ENCODE measurements at regions of chr1 and their contacts with region 1.

Region 1: GRCh38 chr1:156114101-156114916 is at the start of gene LMNA:
- DNase-seq: peak; percentile 90 to 98
- H3K4me3 ChIP-seq: peak within 1 kb of the TSS; percentile 93 to 100
- H3K27ac ChIP-seq: peak within 1 kb of the TSS; percentile 97
- H3K4me1 ChIP-seq: peaks cover 6 to 21% of the 10 kb centered on the region in 2 donors
- H3K27me3 ChIP-seq: no peaks in the 10 kb centered on the region
- CTCF ChIP-seq: no peak
- total RNA-seq, gene LMNA: 783 TPM

Region 2: DNA sequence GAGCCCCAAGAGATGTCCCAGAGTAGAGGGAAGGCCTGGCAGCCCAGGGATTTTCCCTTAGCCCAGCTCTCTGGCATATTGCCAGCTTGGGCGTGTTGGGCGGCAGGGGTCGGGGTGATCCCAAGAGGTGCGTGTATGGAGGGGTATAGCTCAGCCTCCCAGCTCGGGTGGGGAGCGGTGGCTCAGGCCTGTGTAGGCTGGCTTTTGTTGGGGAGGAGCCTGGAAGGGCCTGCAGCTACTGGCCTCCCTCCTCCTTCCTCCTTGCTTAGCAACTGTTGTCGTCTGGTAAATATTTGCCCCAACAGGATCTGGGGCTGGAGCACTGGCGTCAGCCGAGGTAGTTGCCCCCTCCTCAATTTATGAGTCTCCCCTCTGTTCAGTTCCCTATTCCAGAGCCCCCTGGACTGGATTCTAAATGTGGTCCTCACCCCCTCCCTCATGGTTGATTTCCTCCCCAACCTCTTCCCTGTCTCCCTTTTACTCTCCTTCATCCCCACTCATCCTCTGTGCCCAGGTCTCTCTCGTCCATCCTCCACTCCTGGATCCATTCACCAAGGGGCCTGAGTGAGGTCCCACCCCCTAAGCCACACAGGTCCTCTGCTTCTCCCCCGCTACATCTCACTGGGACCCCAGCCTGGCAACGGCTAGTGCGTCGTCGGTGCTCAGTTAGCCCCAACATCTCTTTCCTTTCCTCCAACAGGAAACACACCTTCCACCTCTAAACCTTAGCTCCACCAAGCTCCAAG is 10.1 kb before region 1 on chr1:
- intact Hi-C with region 1: loop called (anchors 1 kb)
- DNase-seq: peak in 1 of 2 donors; percentile 93
- H3K4me3 ChIP-seq: peak overlapping the region in 1 of 2 donors; percentile 57
- H3K27ac ChIP-seq: peak overlapping the region; percentile 95 to 96
- H3K4me1 ChIP-seq: peaks cover 39 to 59% of the 10 kb centered on the region in 2 donors
- H3K27me3 ChIP-seq: no peaks in the 10 kb centered on the region
- CTCF ChIP-seq: no peak

Region 3: GRCh38 chr1:156129706-156130581 is 15.6 kb after region 1 on chr1:
- intact Hi-C with region 1: loop called (anchors 2 kb)
- DNase-seq: peak; percentile 66 to 97
- H3K4me3 ChIP-seq: peak overlapping the region; percentile 46 to 93
- H3K27ac ChIP-seq: peak overlapping the region; percentile 97
- H3K4me1 ChIP-seq: peaks cover 32 to 52% of the 10 kb centered on the region in 2 donors
- H3K27me3 ChIP-seq: no peaks in the 10 kb centered on the region
- CTCF ChIP-seq: peak; percentile 96 to 98 (median 96)

Region 4: DNA sequence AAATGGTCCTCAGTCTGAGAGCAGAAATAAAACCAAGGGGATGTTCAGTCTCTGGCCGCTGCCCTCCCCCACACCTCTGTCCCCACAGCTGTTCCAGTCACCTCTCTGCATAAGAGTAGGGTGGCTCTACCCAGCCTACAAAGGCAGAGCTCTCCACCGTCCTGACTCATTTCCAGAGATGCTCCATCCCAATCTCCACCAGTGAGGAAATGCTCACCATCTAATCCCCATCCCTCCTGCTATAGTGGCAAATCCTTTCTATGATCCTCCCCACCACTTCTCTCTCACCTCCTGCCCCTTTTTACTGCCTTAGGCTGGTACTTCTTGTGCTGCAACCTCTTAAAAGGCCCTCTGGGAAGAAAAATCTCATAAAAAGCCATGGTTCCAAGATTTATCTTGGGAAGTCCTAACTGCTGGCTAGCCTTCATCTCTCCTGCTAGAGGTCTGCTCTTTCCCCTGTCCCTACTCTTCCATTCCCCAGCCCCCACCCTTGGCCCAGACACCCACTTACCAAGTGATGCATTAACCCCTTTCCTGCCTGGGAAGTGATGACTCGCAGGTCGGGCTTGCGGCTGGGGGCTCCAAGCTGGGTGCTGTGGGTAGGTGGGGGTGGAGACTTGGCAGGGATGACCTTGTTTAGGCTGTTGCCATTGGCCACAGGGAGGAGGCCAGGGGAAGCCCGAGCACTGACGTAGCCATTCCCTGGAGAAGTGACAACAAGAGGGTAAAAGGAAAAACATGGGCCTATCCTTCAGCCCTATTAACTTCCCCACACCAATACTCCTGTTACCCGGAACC is 362.4 kb after region 1 on chr1:
- intact Hi-C with region 1: no loop called
- DNase-seq: no peak
- H3K4me3 ChIP-seq: peak overlapping the region in 1 of 2 donors; percentile 7
- H3K27ac ChIP-seq: peak overlapping the region; percentile 86 to 87
- H3K4me1 ChIP-seq: peaks cover 26 to 68% of the 10 kb centered on the region in 2 donors
- H3K27me3 ChIP-seq: no peaks in the 10 kb centered on the region
- CTCF ChIP-seq: no peak

Measured in ascending aorta (tissue), 2 donors.